Prostate gland (tissue), 2 donors: ENCODE measurements at regions of chr20 and their contacts with region 1.

Region 1: DNA sequence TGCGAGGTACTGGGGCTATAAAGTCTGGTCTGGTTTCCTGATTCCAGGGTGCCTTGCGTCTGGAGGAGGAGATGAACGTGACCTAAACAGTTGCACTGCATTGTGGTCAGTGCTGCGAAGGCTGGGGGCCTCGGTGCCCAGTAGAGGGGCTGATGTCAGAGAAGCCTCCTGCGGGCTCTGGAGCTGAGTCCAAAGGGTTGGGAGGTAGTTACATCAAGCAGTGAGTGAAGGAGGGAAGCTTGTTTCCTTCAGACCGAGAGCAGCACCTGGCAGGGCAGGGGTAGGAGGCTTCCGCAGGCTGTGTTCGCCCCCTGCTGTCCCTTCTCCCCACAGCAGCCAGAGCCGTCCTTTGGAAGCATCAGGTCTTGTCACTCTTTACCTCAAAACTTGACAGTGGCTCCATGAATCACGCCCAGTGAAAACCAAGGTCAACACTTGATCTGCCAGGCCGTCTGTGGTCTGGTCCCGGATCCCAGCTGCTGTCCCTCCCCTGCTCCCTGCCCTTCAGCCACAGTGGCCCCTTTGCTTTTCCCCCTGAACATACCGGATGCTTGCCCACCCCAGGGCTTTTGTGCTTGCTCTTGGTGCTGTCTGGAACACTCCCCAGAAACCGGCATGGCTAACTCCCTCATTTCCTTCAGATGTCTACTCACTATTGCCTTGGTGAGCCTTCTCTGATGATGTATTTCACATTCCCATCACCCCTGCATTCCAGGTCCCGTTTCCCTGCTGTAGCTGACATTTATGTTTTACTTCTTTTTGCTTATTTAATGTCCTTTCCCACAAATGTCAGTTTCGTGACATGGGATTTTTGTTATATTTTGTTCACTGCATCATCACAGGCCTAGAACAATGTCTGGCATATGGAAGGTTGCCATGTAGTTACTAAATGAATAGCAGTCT is 7.0 kb downstream of the DYNLRB1 start:
- DNase-seq: peak; percentile 46
- H3K4me3 ChIP-seq: no peak overlapping the region
- H3K27ac ChIP-seq: peak overlapping the region; percentile 64 to 86
- H3K4me1 ChIP-seq: peaks cover 21% of the 10 kb centered on the region
- H3K27me3 ChIP-seq: no peaks in the 10 kb centered on the region
- CTCF ChIP-seq: peak in 2 of 4 experiments; percentile 63
- POLR2A ChIP-seq: no peak

Region 2: GRCh38 chr20:34312544-34313217 is 210.5 kb before region 1 on chr20:
- intact Hi-C with region 1: loop called (anchors 1 kb)
- DNase-seq: peak; percentile 81
- H3K4me3 ChIP-seq: peak overlapping the region in 1 of 2 donors; percentile 15
- H3K27ac ChIP-seq: no peak overlapping the region
- H3K4me1 ChIP-seq: peaks cover 6% of the 10 kb centered on the region
- H3K27me3 ChIP-seq: no peaks in the 10 kb centered on the region
- CTCF ChIP-seq: peak; percentile 82 to 100 (median 96)
- POLR2A ChIP-seq: no peak